HepG2 (cell line): ENCODE measurements at regions of chr7 and their contacts with region 1.

Region 1: GRCh38 chr7:45160417-45160881 is 2.9 kb downstream of the RAMP3 start:
- DNase-seq: no peak
- ATAC-seq: no peak
- H3K4me3 ChIP-seq: no peak overlapping the region
- H3K27ac ChIP-seq: no peak overlapping the region
- H3K4me1 ChIP-seq: no peaks in the 10 kb centered on the region
- H3K27me3 ChIP-seq: peaks cover 7 to 57% of the 10 kb centered on the region in 2 experiments; a peak in 4 of 5 replicates
- CTCF ChIP-seq: no peak
- EP300 ChIP-seq: no peak
- POLR2A ChIP-seq: no peak
- RAD21 ChIP-seq: no peak

Region 2: GRCh38 chr7:45252857-45253256 is 92.4 kb after region 1 on chr7:
- CTCF ChIA-PET with region 1: no interaction called
- POLR2A ChIA-PET with region 1: no interaction called
- in situ Hi-C with region 1: no loop called
- intact Hi-C with region 1: no loop called
- DNase-seq: no peak
- ATAC-seq: no peak
- H3K4me3 ChIP-seq: no peak overlapping the region
- H3K27ac ChIP-seq: no peak overlapping the region
- H3K4me1 ChIP-seq: no peaks in the 10 kb centered on the region
- H3K27me3 ChIP-seq: peaks cover 0 to 7% of the 10 kb centered on the region in 2 experiments; a peak in 1 of 5 replicates
- CTCF ChIP-seq: no peak
- EP300 ChIP-seq: no peak
- POLR2A ChIP-seq: no peak
- RAD21 ChIP-seq: no peak

Region 3: GRCh38 chr7:45391618-45392451 is 231.4 kb after region 1 on chr7:
- CTCF ChIA-PET with region 1: no interaction called
- POLR2A ChIA-PET with region 1: no interaction called
- in situ Hi-C with region 1: no loop called
- intact Hi-C with region 1: no loop called
- DNase-seq: no peak
- ATAC-seq: no peak
- H3K4me3 ChIP-seq: no peak overlapping the region
- H3K27ac ChIP-seq: no peak overlapping the region
- H3K4me1 ChIP-seq: no peaks in the 10 kb centered on the region
- H3K27me3 ChIP-seq: no peaks in the 10 kb centered on the region
- CTCF ChIP-seq: no peak
- EP300 ChIP-seq: no peak
- POLR2A ChIP-seq: no peak
- RAD21 ChIP-seq: no peak

Region 4: DNA sequence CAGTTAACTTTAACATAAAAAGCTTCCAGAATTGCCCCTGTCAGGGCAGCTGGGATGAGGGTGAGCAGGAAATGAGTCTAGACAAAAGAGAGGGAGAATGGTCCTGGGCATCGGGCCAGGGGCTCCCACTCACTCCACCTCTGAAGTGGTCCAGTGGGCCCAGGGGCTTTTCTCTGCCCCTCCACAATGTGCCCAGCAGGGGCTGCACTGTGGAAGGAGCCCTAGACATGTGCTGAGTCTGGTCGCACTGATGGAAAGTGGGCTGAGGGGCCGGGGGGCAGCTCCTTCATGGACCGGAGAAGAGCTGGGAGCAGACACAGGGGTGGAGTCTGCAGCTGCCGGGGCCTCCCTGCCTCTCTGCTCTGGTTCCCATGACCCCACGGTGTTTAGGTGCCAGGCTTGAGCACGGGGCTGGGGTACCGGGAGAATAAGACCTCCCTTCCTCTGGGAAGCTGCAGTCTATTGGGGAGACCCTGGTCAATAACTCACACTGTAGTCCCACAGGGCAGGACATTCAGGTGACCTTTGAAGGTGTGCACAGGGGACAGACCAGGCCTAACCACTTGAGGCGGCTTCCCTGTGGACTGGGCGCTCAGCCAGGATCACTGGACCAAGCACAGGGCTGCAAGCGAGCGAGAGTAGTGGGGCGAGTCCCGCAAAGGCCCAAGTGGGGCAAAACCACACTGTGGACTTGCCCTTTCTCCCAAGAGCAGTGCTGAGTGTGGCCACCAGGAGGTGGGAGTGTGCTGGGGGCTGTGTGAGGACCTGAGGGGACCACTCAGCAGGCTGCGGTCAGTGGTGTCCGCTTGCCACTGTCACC is 419.8 kb after region 1 on chr7:
- CTCF ChIA-PET with region 1: no interaction called
- POLR2A ChIA-PET with region 1: no interaction called
- in situ Hi-C with region 1: loop called (anchors 25 kb)
- intact Hi-C with region 1: loop called (anchors 10 kb)
- DNase-seq: no peak
- ATAC-seq: peak; percentile 83
- H3K4me3 ChIP-seq: no peak overlapping the region
- H3K27ac ChIP-seq: no peak overlapping the region
- H3K4me1 ChIP-seq: peaks cover 6% of the 10 kb centered on the region
- H3K27me3 ChIP-seq: peaks cover 10 to 31% of the 10 kb centered on the region in 2 experiments
- CTCF ChIP-seq: peak; percentile 60
- EP300 ChIP-seq: no peak
- POLR2A ChIP-seq: no peak
- RAD21 ChIP-seq: no peak